ENCODE measurements at regions of chr4 and their contacts with region 1.

Region 1: GRCh38 chr4:153344131-153345010 is at the start of gene MND1:
- DNase-seq: peak; percentile 91
- ATAC-seq: peak; percentile 93
- H3K4me3 Mint-ChIP-seq: peak within 1 kb of the TSS; percentile 94
- H3K27ac Mint-ChIP-seq: no peak within 1 kb of the TSS
- H3K4me1 Mint-ChIP-seq: peaks cover 44% of the 10 kb centered on the region
- H3K27me3 Mint-ChIP-seq: no peaks in the 10 kb centered on the region
- CTCF ChIP-seq: peak; percentile 72
- total RNA-seq, gene MND1: 0.27 and 0.53 TPM in 2 replicates

Region 2: DNA sequence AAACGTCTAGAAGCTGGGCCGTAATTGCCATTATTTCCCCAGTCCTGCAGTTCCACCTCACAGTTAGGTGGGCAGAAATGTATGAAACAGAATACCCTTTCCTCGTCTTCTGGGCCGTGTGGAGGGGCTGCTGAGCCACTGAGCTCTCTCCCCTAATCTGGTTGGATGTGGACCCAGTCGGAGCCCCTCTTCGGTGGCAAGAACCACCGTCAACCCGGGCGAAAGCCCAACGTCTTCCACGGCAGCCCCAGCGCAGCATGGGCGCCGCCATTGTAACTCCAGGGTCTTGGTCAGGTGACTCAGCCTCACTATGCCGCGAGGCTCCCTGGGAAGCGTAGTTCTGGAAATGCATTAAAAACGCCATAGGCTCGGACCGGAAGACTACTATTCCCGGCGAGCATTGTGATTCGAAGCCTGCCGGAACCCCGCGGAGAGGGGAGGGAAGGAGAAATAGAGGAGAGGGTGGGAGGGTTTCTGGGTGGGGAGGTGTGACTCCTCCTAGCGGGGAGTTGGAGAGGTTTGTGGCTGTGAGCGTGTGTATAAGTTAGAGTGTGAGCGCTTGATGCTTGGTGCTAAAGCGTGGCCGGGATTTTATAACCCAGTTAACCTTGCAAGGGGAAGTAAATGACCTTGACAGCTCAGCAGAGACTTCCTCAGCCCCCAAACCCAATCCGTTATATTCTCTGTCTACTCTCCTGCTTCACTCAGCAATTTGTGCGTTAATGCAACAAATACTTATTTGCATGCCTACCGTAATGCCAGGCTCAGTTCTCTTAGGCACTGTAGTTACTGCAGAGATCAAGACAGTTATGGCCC is 1583.5 kb before region 1 on chr4 and contains the start of gene GATB:
- CTCF ChIA-PET with region 1: no interaction called
- POLR2A ChIA-PET with region 1: no interaction called
- intact Hi-C with region 1: loop called (anchors 5 kb)
- DNase-seq: peak; percentile 76
- ATAC-seq: peak; percentile 98
- H3K4me3 Mint-ChIP-seq: peak within 1 kb of the TSS; percentile 100
- H3K27ac Mint-ChIP-seq: peak within 1 kb of the TSS; percentile 98
- H3K4me1 Mint-ChIP-seq: peaks cover 13% of the 10 kb centered on the region
- H3K27me3 Mint-ChIP-seq: peaks cover 6% of the 10 kb centered on the region
- CTCF ChIP-seq: no peak
- total RNA-seq, gene GATB: 22.1 and 22.9 TPM in 2 replicates

Region 3: DNA sequence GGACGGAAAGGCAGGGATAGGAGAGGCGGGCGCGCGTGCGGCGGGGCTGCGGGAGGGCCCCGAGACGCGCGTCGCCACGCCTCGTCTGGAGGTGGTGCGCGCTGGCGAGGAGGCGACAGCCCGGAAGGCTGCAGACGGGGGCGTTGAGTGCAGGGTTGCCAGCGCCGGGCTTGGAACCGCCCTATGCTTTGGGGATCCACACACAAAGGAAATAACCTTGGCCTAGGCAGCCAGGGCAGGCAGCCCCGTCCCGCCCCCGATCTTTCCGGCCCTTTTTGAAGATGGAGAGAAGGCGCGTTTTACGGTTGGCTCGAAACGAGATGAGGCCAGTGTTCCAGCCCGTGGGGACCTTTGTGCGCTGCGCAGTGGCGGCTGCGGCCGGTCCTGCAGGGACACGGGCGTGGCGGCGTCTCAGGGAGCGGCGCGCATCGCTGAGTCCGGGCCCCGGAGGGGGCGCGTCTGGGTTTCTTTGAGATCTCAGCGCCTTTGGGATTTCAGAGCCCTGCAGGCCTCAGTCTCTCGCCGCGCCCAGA is 191.0 kb before region 1 on chr4:
- CTCF ChIA-PET with region 1: no interaction called
- POLR2A ChIA-PET with region 1: no interaction called
- intact Hi-C with region 1: no loop called
- DNase-seq: peak; percentile 63
- ATAC-seq: peak; percentile 76
- H3K4me3 Mint-ChIP-seq: peak overlapping the region; percentile 87
- H3K27ac Mint-ChIP-seq: peak overlapping the region; percentile 85
- H3K4me1 Mint-ChIP-seq: peaks cover 35% of the 10 kb centered on the region
- H3K27me3 Mint-ChIP-seq: peaks cover 30% of the 10 kb centered on the region
- CTCF ChIP-seq: no peak

Region 4: GRCh38 chr4:153488006-153488891 is 143.9 kb after region 1 on chr4:
- CTCF ChIA-PET with region 1: no interaction called
- POLR2A ChIA-PET with region 1: no interaction called
- intact Hi-C with region 1: loop called (anchors 2 kb)
- DNase-seq: peak; percentile 62
- ATAC-seq: peak; percentile 76
- H3K4me3 Mint-ChIP-seq: peak overlapping the region; percentile 78
- H3K27ac Mint-ChIP-seq: peak overlapping the region; percentile 92
- H3K4me1 Mint-ChIP-seq: peaks cover 89% of the 10 kb centered on the region
- H3K27me3 Mint-ChIP-seq: no peaks in the 10 kb centered on the region
- CTCF ChIP-seq: no peak

Region 5: GRCh38 chr4:153643406-153644383 is 299.3 kb after region 1 on chr4:
- CTCF ChIA-PET with region 1: interaction called, 21 read pairs
- POLR2A ChIA-PET with region 1: interaction called, 5 read pairs
- intact Hi-C with region 1: loop called (anchors 1 kb)
- DNase-seq: no peak
- ATAC-seq: peak; percentile 95
- H3K4me3 Mint-ChIP-seq: no peak overlapping the region
- H3K27ac Mint-ChIP-seq: no peak overlapping the region
- H3K4me1 Mint-ChIP-seq: peaks cover 10% of the 10 kb centered on the region
- H3K27me3 Mint-ChIP-seq: no peaks in the 10 kb centered on the region
- CTCF ChIP-seq: peak; percentile 36

Region 6: GRCh38 chr4:154506253-154506652 is 1161.9 kb after region 1 on chr4:
- CTCF ChIA-PET with region 1: no interaction called
- POLR2A ChIA-PET with region 1: no interaction called
- intact Hi-C with region 1: loop called (anchors 10 kb)
- DNase-seq: no peak
- ATAC-seq: no peak
- H3K4me3 Mint-ChIP-seq: no peak overlapping the region
- H3K27ac Mint-ChIP-seq: no peak overlapping the region
- H3K4me1 Mint-ChIP-seq: no peaks in the 10 kb centered on the region
- H3K27me3 Mint-ChIP-seq: peaks cover 30% of the 10 kb centered on the region
- CTCF ChIP-seq: no peak

Measured in activated B cell treated with CpG ODN at 0.5 μM for 24 hours (primary cell).